GM12878 (cell line): ENCODE measurements at regions of chr7 and their contacts with region 1.

Region 1: GRCh38 chr7:99040104-99040958 is 103.6 kb downstream of the SMURF1 start:
- DNase-seq: peak; percentile 9
- ATAC-seq: peak; percentile 94
- H3K4me3 ChIP-seq: no peak overlapping the region
- H3K27ac ChIP-seq: no peak overlapping the region
- H3K4me1 ChIP-seq: no peaks in the 10 kb centered on the region; the same call in 1 of the 2 replicates
- H3K27me3 ChIP-seq: no peaks in the 10 kb centered on the region
- CTCF ChIP-seq: peak; percentile 63 to 85 (median 64)
- EP300 ChIP-seq: no peak
- POLR2A ChIP-seq: 0 out of 2 replicates have a peak, but pooled peaks have one; percentile 23
- RAD21 ChIP-seq: peak; percentile 86

Region 2: GRCh38 chr7:99143853-99144672 is 103.7 kb after region 1 on chr7 and contains the start of gene SMURF1:
- CTCF ChIA-PET with region 1: no interaction called
- POLR2A ChIA-PET with region 1: no interaction called
- RAD21 ChIA-PET with region 1: no interaction called
- SMC1A ChIA-PET with region 1: no interaction called
- in situ Hi-C with region 1: no loop called
- intact Hi-C with region 1: loop called (anchors 5 kb)
- DNase-seq: no peak
- ATAC-seq: peak; percentile 57
- H3K4me3 ChIP-seq: peak within 1 kb of the TSS; percentile 88
- H3K27ac ChIP-seq: peak within 1 kb of the TSS; percentile 76
- H3K4me1 ChIP-seq: peaks cover 9% of the 10 kb centered on the region
- H3K27me3 ChIP-seq: no peaks in the 10 kb centered on the region
- CTCF ChIP-seq: no peak
- EP300 ChIP-seq: no peak
- POLR2A ChIP-seq: peak; percentile 80
- RAD21 ChIP-seq: no peak
- polyA plus RNA-seq, gene SMURF1: 0.76 to 1.1 TPM

Region 3: GRCh38 chr7:99312316-99313203 is 272.2 kb after region 1 on chr7:
- CTCF ChIA-PET with region 1: interaction called, 27 read pairs
- POLR2A ChIA-PET with region 1: no interaction called
- RAD21 ChIA-PET with region 1: interaction called, 5 read pairs
- SMC1A ChIA-PET with region 1: interaction called, 11 read pairs
- in situ Hi-C with region 1: loop called (anchors 5 kb)
- intact Hi-C with region 1: loop called (anchors 1 kb)
- DNase-seq: peak; percentile 35
- ATAC-seq: peak; percentile 84
- H3K4me3 ChIP-seq: no peak overlapping the region
- H3K27ac ChIP-seq: no peak overlapping the region
- H3K4me1 ChIP-seq: peaks cover 13% of the 10 kb centered on the region
- H3K27me3 ChIP-seq: no peaks in the 10 kb centered on the region
- CTCF ChIP-seq: peak; percentile 87 to 91 (median 88)
- EP300 ChIP-seq: no peak
- POLR2A ChIP-seq: no peak
- RAD21 ChIP-seq: peak; percentile 90